Panc1 (cell line): ENCODE measurements at regions of chr17 and their contacts with region 1.

Region 1: DNA sequence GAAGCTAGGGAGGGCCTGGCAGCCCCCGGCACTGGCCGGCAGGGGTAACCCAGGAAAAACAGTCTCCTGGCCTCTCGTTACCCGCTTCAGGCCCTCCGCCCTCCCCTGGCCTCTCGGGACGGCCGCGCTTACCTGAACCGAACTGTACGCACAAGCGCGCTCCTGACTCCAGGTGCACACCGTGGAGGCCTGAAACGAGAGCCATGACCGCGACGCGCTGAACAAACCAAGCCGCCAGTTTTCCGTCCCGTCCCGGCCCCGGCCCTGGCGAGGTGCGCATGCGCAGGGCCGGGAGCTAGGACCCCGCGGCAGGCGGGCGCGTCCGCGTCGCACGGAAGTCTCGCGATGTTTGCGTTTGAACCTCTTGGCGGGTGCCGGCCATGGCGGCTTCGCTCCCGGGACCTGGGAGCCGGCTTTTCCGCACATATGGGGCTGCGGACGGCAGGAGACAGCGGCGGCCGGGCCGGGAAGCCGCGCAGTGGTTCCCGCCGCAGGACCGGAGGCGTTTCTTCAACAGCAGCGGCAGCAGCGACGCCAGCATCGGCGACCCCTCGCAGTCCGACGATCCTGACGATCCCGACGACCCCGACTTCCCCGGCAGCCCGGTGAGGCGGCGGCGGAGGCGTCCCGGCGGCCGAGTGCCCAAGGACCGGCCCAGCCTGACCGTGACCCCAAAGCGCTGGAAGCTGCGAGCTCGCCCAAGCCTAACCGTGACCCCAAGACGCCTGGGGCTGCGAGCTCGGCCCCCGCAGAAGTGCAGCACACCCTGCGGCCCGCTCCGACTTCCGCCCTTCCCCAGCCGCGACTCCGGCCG is at the start of gene HASPIN:
- DNase-seq: no peak
- ATAC-seq: peak; percentile 97
- H3K4me3 ChIP-seq: peak within 1 kb of the TSS; percentile 90 to 96
- H3K27ac ChIP-seq: peak within 1 kb of the TSS; percentile 90
- H3K4me1 ChIP-seq: peaks cover 13% of the 10 kb centered on the region
- H3K27me3 ChIP-seq: no peaks in the 10 kb centered on the region
- CTCF ChIP-seq: no peak
- total RNA-seq, gene HASPIN: 10.6 TPM

Region 2: DNA sequence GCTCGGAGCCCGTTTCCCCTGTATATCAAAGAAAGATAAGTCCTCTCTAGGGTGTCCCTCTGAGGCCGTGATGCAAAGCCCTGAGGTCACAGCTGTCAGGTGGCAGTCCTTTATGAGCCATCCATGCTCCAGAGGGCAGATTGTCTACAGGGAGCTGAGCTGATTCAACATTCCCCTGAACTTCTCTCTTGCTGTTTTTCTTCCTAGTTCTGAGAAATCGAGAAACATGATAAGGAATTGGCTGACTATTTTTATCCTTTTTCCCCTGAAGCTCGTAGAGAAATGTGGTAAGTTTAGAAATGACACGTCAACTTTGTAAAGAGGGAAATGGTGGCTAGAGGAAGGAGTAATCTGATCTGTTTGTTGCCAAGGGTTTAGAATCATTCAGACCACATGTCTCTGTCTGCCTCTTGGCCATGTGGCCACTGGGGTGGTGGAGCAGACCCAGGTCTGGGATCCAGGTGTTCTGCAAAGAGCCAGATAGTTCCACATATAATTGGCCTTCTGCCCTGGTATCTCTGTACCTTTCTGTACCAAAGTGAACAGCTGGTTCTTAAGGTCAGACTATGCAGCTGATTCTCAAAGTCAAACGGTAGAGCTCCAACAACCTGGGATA is 83.7 kb before region 1 on chr17:
- CTCF ChIA-PET with region 1: no interaction called
- POLR2A ChIA-PET with region 1: no interaction called
- in situ Hi-C with region 1: no loop called
- intact Hi-C with region 1: no loop called
- DNase-seq: no peak
- ATAC-seq: no peak
- H3K4me3 ChIP-seq: no peak overlapping the region
- H3K27ac ChIP-seq: no peak overlapping the region
- H3K4me1 ChIP-seq: no peaks in the 10 kb centered on the region
- H3K27me3 ChIP-seq: no peaks in the 10 kb centered on the region
- CTCF ChIP-seq: no peak

Region 3: DNA sequence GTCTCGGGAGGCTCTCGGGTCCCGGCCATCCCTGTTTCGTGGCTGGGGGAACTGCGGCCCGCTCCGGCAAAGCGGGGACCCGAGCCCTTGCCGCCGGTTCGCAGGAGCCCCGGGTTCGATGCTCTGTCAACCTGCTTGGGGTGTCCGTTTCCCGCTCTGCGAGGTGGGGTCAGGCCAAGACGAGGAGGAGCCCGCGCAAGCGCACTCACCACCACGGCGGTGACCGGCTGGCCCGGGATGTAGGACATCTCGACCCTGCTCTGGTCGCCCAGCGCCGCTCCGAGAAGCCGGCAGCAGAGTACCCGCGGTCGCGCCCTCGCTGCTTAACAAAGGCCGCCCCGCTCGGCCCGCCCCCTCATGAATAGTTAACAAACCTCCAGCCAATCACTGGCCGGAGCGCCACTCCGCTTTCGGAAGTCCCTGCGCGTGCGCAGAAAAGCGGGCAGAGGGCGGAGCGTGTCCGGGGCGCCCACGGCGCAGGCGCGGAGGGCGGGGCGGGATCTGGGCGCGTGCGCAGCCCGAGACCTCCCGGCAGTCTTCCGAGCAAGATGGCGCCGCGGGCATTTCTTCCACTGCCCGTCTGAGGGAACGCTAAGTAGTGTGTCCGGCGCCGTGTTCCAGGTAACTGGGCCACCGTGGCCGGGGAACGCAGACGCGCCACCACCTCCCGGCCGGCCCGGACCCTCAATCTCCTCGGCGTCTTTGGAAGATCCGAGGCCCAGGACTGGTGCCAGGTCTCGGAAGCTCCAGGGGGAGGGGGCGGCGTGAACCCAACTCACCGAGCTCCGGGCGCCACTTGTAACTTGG is 55.3 kb before region 1 on chr17 and contains the starts of genes EMC6 and TAX1BP3:
- CTCF ChIA-PET with region 1: no interaction called
- POLR2A ChIA-PET with region 1: interaction called, 13 read pairs
- in situ Hi-C with region 1: no loop called
- intact Hi-C with region 1: no loop called
- DNase-seq: peak; percentile 92
- ATAC-seq: peak; percentile 97
- H3K4me3 ChIP-seq: peak within 1 kb of the TSS; percentile 90 to 92
- H3K27ac ChIP-seq: peak within 1 kb of the TSS; percentile 93
- H3K4me1 ChIP-seq: 0 out of 2 replicates have a peak, but pooled peaks cover 7% of the 10 kb centered on the region
- H3K27me3 ChIP-seq: no peaks in the 10 kb centered on the region
- CTCF ChIP-seq: no peak
- total RNA-seq, gene EMC6: 65.9 TPM
- total RNA-seq, gene TAX1BP3: 122 TPM